CD4-positive, alpha-beta T cell (primary cell): ENCODE measurements at regions of chr7 and their contacts with region 1.

Region 1: GRCh38 chr7:6453734-6454133 is 6.0 kb upstream of the DAGLB start:
- DNase-seq: no peak
- ATAC-seq: no peak
- H3K4me3 ChIP-seq: no peak overlapping the region
- H3K4me3 Mint-ChIP-seq: peak overlapping the region; percentile 42
- H3K27ac ChIP-seq: no peak overlapping the region
- H3K27ac Mint-ChIP-seq: no peak overlapping the region
- H3K4me1 ChIP-seq: peaks cover 5% of the 10 kb centered on the region
- H3K4me1 Mint-ChIP-seq: no peaks in the 10 kb centered on the region
- H3K27me3 ChIP-seq: no peaks in the 10 kb centered on the region
- H3K27me3 Mint-ChIP-seq: no peaks in the 10 kb centered on the region
- CTCF ChIP-seq: no peak

Region 2: GRCh38 chr7:6465862-6466261 is 12.1 kb after region 1 on chr7:
- CTCF ChIA-PET with region 1: no interaction called
- POLR2A ChIA-PET with region 1: no interaction called
- intact Hi-C with region 1: no loop called
- DNase-seq: no peak
- ATAC-seq: no peak
- H3K4me3 ChIP-seq: no peak overlapping the region
- H3K4me3 Mint-ChIP-seq: no peak overlapping the region
- H3K27ac ChIP-seq: no peak overlapping the region
- H3K27ac Mint-ChIP-seq: no peak overlapping the region
- H3K4me1 ChIP-seq: no peaks in the 10 kb centered on the region
- H3K4me1 Mint-ChIP-seq: no peaks in the 10 kb centered on the region
- H3K27me3 ChIP-seq: no peaks in the 10 kb centered on the region
- H3K27me3 Mint-ChIP-seq: no peaks in the 10 kb centered on the region
- CTCF ChIP-seq: no peak

Region 3: DNA sequence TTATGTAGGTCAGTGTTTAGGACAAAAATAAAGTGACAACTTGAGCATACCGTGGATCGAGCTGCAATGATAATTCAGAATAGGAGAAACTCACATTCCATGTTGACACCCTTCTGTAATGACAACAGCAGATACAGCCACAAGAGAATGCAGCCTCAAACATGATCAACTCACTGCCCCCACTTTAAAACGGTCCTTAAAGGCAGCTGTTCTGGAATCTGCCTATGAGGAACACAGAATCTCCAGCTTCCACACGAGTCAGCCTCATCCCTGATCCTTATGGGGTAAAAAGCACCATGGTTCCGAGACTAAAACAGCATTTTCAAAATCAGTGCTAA is 26.6 kb after region 1 on chr7:
- CTCF ChIA-PET with region 1: no interaction called
- POLR2A ChIA-PET with region 1: interaction called, 3 read pairs
- intact Hi-C with region 1: loop called in 1 of 2 experiments (anchors 2 kb)
- DNase-seq: no peak
- ATAC-seq: no peak
- H3K4me3 ChIP-seq: no peak overlapping the region
- H3K4me3 Mint-ChIP-seq: peak overlapping the region; percentile 56
- H3K27ac ChIP-seq: no peak overlapping the region
- H3K27ac Mint-ChIP-seq: peak overlapping the region; percentile 27
- H3K4me1 ChIP-seq: peaks cover 54% of the 10 kb centered on the region
- H3K4me1 Mint-ChIP-seq: peaks cover 82% of the 10 kb centered on the region
- H3K27me3 ChIP-seq: no peaks in the 10 kb centered on the region
- H3K27me3 Mint-ChIP-seq: no peaks in the 10 kb centered on the region
- CTCF ChIP-seq: no peak